PC-3 (cell line): ENCODE measurements at regions of chr5 and their contacts with region 1.

Region 1: DNA sequence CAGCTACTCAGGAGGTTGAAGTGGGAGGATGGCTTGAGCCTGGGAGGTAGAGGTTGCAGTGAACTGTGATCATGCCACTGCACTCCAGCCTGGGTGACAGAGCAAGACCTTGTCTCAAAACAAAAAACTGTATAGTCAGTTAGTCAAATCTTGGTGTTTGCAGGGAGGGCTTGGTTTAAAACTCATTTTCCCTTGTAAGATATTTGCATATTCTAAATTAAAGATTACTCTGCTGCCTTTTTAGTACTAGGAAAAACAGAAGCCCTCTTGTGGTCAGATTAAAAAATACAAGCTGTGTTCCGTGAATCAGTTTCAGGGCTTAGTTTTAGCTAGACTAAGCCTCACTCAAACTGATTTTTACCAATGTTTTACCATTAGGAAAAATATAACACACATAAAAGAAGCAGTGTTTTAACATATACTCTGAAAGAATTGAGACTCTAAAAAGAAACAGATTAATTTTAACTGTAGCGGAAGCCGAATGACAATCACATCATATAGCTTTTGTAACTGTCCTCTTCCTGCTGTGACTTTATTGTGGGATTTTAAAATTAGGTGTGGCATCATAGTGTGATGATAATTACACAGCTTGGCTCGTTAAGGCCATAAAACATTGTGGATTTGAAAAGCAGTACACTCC is 84.9 kb upstream of the BASP1 start:
- DNase-seq: peak; percentile 88
- ATAC-seq: no peak
- H3K4me3 ChIP-seq: no peak overlapping the region
- H3K27ac ChIP-seq: no peak overlapping the region
- H3K4me1 ChIP-seq: peaks cover 27% of the 10 kb centered on the region
- H3K27me3 ChIP-seq: no peaks in the 10 kb centered on the region
- CTCF ChIP-seq: peak; percentile 94

Region 2: GRCh38 chr5:16957304-16958196 is 175.0 kb before region 1 on chr5:
- CTCF ChIA-PET with region 1: interaction called, 6 read pairs
- POLR2A ChIA-PET with region 1: no interaction called
- intact Hi-C with region 1: loop called (anchors 5 kb)
- DNase-seq: peak; percentile 100
- ATAC-seq: peak; percentile 97
- H3K4me3 ChIP-seq: no peak overlapping the region
- H3K27ac ChIP-seq: peak overlapping the region; percentile 84
- H3K4me1 ChIP-seq: peaks cover 26% of the 10 kb centered on the region
- H3K27me3 ChIP-seq: no peaks in the 10 kb centered on the region
- CTCF ChIP-seq: no peak

Region 3: DNA sequence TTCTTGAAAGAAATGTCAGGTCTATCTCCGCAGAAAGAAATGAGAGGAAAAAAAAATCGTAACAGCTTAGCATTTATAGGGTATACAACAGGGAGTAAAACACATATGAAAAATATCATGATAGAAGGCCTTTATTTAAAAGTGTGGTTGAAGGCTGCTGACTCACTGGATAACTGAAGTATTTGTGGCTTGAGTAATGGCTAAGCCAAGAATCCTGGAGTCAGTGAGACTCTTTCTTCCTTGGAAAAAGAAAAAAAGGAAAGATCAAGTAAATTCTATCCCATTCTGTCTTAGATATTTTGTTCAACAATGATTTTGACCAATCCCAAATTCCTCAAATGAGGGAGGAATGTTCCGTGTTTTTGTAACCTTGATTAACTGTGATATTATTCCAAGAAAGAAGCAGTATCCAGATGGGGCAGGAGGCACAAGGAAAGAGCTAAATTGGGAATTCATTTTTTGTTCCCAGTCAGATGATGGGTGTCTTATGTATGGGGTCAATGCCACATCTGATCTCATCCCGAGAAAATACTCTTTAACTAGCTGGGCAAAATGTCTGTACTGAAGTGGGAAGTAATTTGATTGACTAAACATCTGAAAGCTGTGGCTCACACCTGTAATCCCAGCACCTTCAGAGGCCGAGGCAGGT is 132.1 kb before region 1 on chr5:
- CTCF ChIA-PET with region 1: no interaction called
- POLR2A ChIA-PET with region 1: no interaction called
- intact Hi-C with region 1: loop called (anchors 1 kb)
- DNase-seq: peak; percentile 99
- ATAC-seq: peak; percentile 99
- H3K4me3 ChIP-seq: peak overlapping the region; percentile 9; the same call in 1 of the 2 replicates
- H3K27ac ChIP-seq: peak overlapping the region; percentile 84
- H3K4me1 ChIP-seq: peaks cover 21% of the 10 kb centered on the region
- H3K27me3 ChIP-seq: no peaks in the 10 kb centered on the region
- CTCF ChIP-seq: no peak